ENCODE measurements at regions of chr1 and their contacts with region 1.

Region 1: DNA sequence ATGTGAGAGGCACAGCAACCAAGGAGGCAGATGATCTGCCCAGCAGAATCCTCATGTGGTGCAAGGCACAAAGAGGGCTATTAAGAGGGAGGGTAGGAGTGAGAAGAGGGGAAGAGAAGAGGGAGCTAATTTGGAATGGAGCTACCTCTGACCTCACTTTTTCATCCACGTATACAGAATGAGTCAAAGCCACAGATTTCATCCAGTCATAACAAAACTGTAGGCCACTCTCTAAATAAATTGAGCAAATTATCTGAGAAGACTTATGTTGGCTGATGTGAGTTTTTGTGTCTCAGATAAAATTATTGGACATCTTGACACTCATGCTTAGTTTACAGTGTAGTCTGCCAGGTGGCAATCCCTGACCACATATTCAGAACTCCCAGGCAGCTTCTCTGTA is 325.6 kb downstream of the TTLL7 start:
- DNase-seq: no peak
- ATAC-seq: no peak
- H3K4me3 ChIP-seq: no peak overlapping the region
- H3K27ac ChIP-seq: no peak overlapping the region
- H3K4me1 ChIP-seq: no peaks in the 10 kb centered on the region
- H3K27me3 ChIP-seq: no peaks in the 10 kb centered on the region

Region 2: GRCh38 chr1:83574791-83575190 is 98.5 kb before region 1 on chr1:
- intact Hi-C with region 1: no loop called
- DNase-seq: no peak
- ATAC-seq: no peak
- H3K4me3 ChIP-seq: no peak overlapping the region
- H3K27ac ChIP-seq: no peak overlapping the region
- H3K4me1 ChIP-seq: peaks cover 0 to 2% of the 10 kb centered on the region in 2 donors
- H3K27me3 ChIP-seq: no peaks in the 10 kb centered on the region

Region 3: GRCh38 chr1:83741348-83741747 is 68.0 kb after region 1 on chr1:
- intact Hi-C with region 1: loop called in 1 of 2 experiments (anchors 2 kb)
- DNase-seq: no peak
- ATAC-seq: no peak
- H3K4me3 ChIP-seq: no peak overlapping the region
- H3K27ac ChIP-seq: no peak overlapping the region
- H3K4me1 ChIP-seq: no peaks in the 10 kb centered on the region
- H3K27me3 ChIP-seq: no peaks in the 10 kb centered on the region

Region 4: GRCh38 chr1:83931658-83932253 is 258.4 kb after region 1 on chr1:
- intact Hi-C with region 1: no loop called
- DNase-seq: no peak
- ATAC-seq: no peak
- H3K4me3 ChIP-seq: no peak overlapping the region
- H3K27ac ChIP-seq: no peak overlapping the region
- H3K4me1 ChIP-seq: peaks cover 3 to 4% of the 10 kb centered on the region in 2 donors
- H3K27me3 ChIP-seq: no peaks in the 10 kb centered on the region

Measured in aorta (tissue), 5 donors.